Dorsolateral prefrontal cortex (tissue), 120 donors: ENCODE measurements at regions of chr9 and their contacts with region 1.

Region 1: GRCh38 chr9:125746017-125746773 is 978 bp upstream of the PBX3 start:
- DNase-seq: peak; percentile 90 to 96 (median 94)
- H3K4me3 ChIP-seq: peak overlapping the region; percentile 47 to 89 (median 76)
- H3K27ac ChIP-seq: peak overlapping the region in 57 of 59 donors; percentile 34 to 94 (median 87)
- H3K27me3 ChIP-seq: no peaks in the 10 kb centered on the region
- CTCF ChIP-seq: peak in 21 of 56 donors; percentile 3 to 45 (median 15)

Region 2: GRCh38 chr9:125374443-125375309 is 371.5 kb before region 1 on chr9:
- intact Hi-C with region 1: no loop called
- DNase-seq: peak; percentile 42 to 81 (median 70)
- H3K4me3 ChIP-seq: peak overlapping the region in 57 of 59 donors; percentile 15 to 68 (median 48)
- H3K27ac ChIP-seq: peak overlapping the region in 3 of 59 donors; percentile 22 to 44 (median 39)
- H3K27me3 ChIP-seq: no peaks in the 10 kb centered on the region
- CTCF ChIP-seq: peak; percentile 31 to 86 (median 74)

Region 3: GRCh38 chr9:125558453-125559092 is 187.6 kb before region 1 on chr9:
- intact Hi-C with region 1: loop called (anchors 5 kb)
- DNase-seq: peak in 6 of 10 donors; percentile 32 to 81 (median 54)
- H3K4me3 ChIP-seq: no peak overlapping the region
- H3K27ac ChIP-seq: peak overlapping the region in 17 of 59 donors; percentile 2 to 58 (median 22)
- H3K27me3 ChIP-seq: no peaks in the 10 kb centered on the region
- CTCF ChIP-seq: peak; percentile 68 to 92 (median 83)

Region 4: GRCh38 chr9:125706661-125707471 is 39.3 kb before region 1 on chr9 and contains the start of gene MAPKAP1:
- intact Hi-C with region 1: loop called (anchors 5 kb)
- DNase-seq: peak; percentile 96 to 99 (median 98)
- H3K4me3 ChIP-seq: peak within 1 kb of the TSS; percentile 71 to 100 (median 96)
- H3K27ac ChIP-seq: peak within 1 kb of the TSS in 58 of 59 donors; percentile 35 to 97 (median 86)
- H3K27me3 ChIP-seq: no peaks in the 10 kb centered on the region
- CTCF ChIP-seq: peak in 24 of 56 donors; percentile 7 to 56 (median 34)
- total RNA-seq, gene MAPKAP1: 42.9 to 115 (median 74.5) TPM

Region 5: DNA sequence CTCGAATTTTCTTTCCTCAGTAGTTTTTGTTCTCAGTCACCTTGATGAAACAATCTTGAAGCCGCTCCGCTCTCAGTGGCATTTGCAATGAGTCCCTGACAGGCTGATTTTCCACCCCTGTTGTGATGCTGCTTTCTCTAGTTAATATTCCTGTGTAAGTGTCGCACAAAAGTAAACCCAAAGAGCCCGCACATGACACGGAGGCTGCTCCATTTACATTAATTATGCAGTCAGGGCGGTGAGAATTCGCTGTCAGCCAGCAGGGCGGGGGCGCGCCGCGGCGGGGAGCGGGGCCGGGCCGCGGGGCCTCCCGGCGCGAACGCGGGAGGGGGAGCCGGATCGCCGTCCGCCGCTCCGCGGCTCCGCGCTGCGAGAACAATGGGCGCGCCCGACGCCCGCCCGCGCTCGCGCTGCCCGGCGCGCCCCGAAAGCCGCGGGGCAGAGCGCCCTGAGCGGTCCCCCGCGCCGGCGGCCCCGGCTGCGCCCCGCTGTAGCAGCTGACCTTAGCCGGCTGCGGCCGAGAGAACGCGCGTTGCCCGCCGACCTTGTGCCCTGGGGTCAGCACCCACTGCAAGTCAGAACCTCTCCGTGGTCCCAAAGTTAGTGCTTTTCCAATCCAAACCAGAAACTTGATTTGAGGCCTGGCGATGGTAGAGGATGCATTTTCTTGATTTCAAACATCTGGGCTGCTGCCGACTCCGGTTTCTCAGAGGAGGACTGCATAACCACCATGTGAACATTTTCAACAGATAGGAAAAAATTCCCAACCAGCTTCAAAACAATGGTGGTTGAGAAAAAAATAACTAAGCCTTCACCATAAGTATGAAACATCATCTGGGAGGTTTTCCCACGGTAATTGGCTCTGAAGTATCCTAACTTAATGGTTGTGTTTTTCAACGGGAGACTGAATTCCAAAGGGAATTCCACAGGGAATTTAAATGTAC is 143.6 kb after region 1 on chr9:
- intact Hi-C with region 1: loop called (anchors 5 kb)
- DNase-seq: peak; percentile 18 to 76 (median 55)
- H3K4me3 ChIP-seq: peak overlapping the region; percentile 40 to 77 (median 63)
- H3K27ac ChIP-seq: peak overlapping the region in 58 of 59 donors; percentile 10 to 89 (median 77)
- H3K27me3 ChIP-seq: no peaks in the 10 kb centered on the region
- CTCF ChIP-seq: peak in 4 of 56 donors; percentile 9 to 19 (median 16)

Region 6: GRCh38 chr9:125959951-125960619 is 213.9 kb after region 1 on chr9:
- intact Hi-C with region 1: loop called in 1 of 2 experiments (anchors 5 kb)
- DNase-seq: no peak
- H3K4me3 ChIP-seq: peak overlapping the region in 40 of 59 donors; percentile 0 to 52 (median 26)
- H3K27ac ChIP-seq: peak overlapping the region in 32 of 59 donors; percentile 2 to 80 (median 40)
- H3K27me3 ChIP-seq: no peaks in the 10 kb centered on the region
- CTCF ChIP-seq: peak in 18 of 56 donors; percentile 13 to 57 (median 22)

Region 7: DNA sequence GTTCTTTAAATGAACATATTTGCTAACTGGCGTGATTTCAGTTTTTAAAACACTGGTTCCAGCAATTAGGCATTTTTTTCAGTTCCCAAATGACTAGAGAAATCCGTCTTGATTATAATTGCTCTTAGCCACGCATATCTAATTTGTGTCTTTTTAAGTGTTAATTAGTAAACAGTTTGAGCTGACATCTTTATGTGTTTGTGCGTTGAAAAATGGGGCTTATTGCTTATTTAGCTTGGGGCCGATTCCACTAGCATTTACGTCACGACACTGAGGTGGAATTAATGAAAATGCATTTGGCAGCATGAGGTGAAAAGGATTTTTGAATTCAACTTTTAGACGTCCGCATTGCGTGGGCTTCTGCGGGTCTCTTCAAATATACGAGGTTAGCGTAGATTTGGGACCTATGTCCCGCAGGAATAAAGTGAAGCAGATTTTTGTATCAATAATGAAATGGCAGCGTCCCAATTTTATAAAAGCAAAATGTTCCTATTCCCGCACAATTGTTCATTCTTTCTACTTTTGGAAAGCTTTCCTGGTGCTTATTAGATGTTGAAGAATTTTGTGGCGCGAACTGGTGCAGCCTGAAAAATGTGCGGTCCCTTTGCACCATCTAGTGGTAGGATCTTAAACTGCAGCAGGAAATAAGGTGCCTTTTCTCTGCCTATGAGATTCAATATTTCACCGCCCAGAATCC is 744.8 kb after region 1 on chr9:
- intact Hi-C with region 1: loop called in 1 of 2 experiments (anchors 5 kb)
- DNase-seq: peak in 3 of 10 donors; percentile 69 to 72 (median 70)
- H3K4me3 ChIP-seq: peak overlapping the region in 47 of 59 donors; percentile 2 to 54 (median 31)
- H3K27ac ChIP-seq: peak overlapping the region in 58 of 59 donors; percentile 38 to 92 (median 82)
- H3K27me3 ChIP-seq: no peaks in the 10 kb centered on the region
- CTCF ChIP-seq: peak; percentile 89 to 99 (median 96)